AG04450 (cell line): ENCODE measurements at regions of chr9 and their contacts with region 1.

Region 1: DNA sequence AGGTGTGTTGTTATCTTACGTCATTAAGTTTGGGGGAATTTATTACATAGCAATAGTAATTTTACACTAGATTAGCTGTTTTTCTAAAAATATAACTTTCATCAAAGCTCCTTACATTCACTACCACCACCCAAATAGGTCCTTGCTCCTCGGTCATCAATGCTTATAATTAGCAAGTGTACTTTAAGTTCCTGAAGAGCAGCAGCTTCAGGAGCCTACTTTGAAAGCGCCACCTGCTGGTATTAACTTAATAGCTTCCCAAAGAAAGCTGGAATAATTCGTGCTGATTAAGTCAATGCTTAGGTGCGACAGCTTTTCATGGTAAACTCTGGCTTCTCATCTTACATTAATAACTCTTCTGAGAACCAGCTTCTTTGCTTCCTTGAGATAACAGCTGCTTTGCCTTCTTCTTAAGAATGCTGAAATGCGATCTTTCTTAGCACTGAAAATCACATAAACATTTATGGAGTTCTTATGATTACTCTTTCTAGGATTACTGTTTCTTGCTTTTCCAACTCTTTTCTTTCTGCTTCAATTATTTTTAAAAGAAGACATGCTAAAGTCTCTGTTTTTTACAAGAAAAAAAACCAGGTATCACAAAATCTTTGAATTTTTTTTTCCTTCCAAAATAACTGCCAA is 10.0 kb upstream of the C5 start:
- DNase-seq: peak; percentile 80
- H3K4me3 ChIP-seq: no peak overlapping the region
- H3K27ac ChIP-seq: no peak overlapping the region
- H3K27me3 ChIP-seq: no peaks in the 10 kb centered on the region
- CTCF ChIP-seq: peak; percentile 81

Region 2: GRCh38 chr9:120936011-120936763 is 123.9 kb before region 1 on chr9:
- CTCF ChIA-PET with region 1: interaction called, 10 read pairs
- POLR2A ChIA-PET with region 1: no interaction called
- DNase-seq: peak; percentile 90
- H3K4me3 ChIP-seq: peak overlapping the region; percentile 55
- H3K27ac ChIP-seq: peak overlapping the region; percentile 97
- H3K27me3 ChIP-seq: no peaks in the 10 kb centered on the region
- CTCF ChIP-seq: peak; percentile 96

Region 3: DNA sequence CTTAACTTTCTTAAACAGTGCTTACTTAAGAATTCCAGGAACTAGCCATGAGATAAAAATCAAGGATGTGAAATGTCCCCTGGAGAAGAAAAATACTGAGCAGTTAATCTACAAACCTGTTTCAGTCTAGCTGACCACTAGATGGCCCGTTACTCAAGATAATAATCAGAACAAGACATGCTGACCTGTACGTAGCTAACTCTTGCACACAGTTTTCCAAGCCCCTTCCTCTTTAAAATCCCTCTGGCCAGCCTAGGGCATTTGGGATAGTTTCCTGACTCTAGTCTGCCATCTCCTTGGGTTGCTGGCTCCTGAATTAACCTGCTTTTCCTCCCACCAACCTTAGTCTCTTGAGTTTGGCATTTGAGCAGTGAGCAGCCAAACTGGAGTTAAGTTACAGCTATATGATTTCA is 74.3 kb before region 1 on chr9:
- CTCF ChIA-PET with region 1: interaction called, 155 read pairs
- POLR2A ChIA-PET with region 1: interaction called, 3 read pairs
- DNase-seq: peak; percentile 38
- H3K4me3 ChIP-seq: no peak overlapping the region
- H3K27ac ChIP-seq: no peak overlapping the region
- H3K27me3 ChIP-seq: no peaks in the 10 kb centered on the region
- CTCF ChIP-seq: peak; percentile 70

Region 4: GRCh38 chr9:121034529-121034928 is 25.6 kb before region 1 on chr9:
- CTCF ChIA-PET with region 1: interaction called, 20 read pairs
- POLR2A ChIA-PET with region 1: no interaction called
- DNase-seq: no peak
- H3K4me3 ChIP-seq: no peak overlapping the region
- H3K27ac ChIP-seq: no peak overlapping the region
- H3K27me3 ChIP-seq: no peaks in the 10 kb centered on the region
- CTCF ChIP-seq: no peak

Region 5: DNA sequence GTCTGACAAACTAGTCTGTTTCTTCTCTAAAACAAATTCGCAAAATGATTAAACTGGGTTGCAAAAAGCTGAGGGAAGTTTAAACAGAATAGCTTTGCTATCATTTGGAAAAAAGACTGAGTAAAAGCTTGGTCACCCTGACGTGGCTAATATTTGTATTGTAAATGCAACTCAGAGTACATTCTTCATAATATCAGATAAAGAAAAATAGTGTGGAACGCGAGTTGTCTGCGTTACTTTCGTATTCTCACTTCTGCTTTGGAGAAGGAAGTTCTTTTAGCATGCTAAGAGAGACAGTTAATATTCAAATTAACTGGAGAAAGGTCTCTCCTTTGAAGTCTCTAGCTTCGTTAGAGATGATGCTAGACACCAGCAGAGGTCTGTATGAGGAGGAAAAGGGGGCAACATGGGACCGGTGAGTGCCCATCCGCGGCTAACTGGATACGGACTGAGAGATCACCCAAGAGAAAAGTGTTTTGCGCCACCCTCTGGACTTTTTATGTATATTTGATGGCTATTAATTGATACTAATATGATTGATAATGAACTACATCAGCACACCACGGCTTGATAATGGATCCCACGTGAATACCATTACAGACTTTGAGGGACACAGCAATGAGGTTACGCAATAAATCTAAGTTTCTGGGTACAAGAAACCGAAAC is 11.8 kb after region 1 on chr9:
- CTCF ChIA-PET with region 1: interaction called, 42 read pairs
- POLR2A ChIA-PET with region 1: no interaction called
- DNase-seq: no peak
- H3K4me3 ChIP-seq: peak overlapping the region; percentile 56
- H3K27ac ChIP-seq: peak overlapping the region; percentile 39
- H3K27me3 ChIP-seq: no peaks in the 10 kb centered on the region
- CTCF ChIP-seq: peak; percentile 44

Region 6: GRCh38 chr9:121138973-121139372 is 78.9 kb after region 1 on chr9:
- CTCF ChIA-PET with region 1: no interaction called
- POLR2A ChIA-PET with region 1: no interaction called
- DNase-seq: no peak
- H3K4me3 ChIP-seq: no peak overlapping the region
- H3K27ac ChIP-seq: no peak overlapping the region
- H3K27me3 ChIP-seq: no peaks in the 10 kb centered on the region
- CTCF ChIP-seq: no peak